Activated CD8-positive, alpha-beta memory T cell treated with anti-CD3 and anti-CD28 coated beads, Interleukin-2, amount 10 ng/mL, durations not matched to agents 7 days and 5 days (primary cell): ENCODE measurements at regions of chr2 and their contacts with region 1.

Region 1: DNA sequence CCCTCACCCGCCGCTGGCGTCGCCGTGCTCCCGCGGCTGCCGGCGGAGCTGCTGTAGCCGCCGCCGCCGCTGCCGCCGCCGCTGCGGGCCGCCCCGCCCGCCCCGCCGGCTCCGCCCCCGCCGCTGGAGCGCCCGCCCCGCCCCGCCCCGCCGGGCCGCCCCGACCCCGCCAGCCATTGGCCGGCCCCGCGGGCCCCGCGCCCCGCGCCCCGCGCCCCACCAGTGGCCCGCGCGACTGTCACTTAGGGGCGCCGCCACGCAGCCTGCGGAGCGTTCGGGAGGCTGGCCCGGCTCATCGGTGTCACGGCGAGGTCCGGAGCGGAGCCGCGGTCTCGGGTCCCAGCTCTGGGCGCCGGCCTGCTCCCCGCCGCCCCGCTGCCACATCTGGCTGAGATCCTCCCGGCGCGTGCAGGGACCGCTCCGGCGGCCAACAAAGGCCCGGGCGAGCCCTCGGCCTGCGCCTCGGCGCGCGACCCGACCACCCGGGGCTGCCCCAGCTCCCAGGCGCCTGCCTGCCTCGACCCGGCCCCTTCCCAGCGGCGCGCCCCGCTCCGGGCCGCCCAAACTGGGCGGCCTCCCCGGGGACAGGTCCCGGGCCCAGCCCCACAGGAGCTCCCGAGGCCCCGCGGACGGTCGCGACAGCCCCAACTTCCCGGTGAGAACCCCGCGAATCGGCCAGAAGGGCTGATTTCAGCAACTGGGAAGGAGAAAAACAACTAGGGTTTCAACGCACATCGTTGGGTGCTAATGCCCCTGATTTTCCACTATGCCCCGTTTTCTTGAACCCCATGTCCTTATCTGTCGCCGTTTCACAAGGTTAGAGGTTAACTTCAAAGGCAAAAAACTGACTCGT is at the start of gene MGAT4A:
- DNase-seq: peak; percentile 83
- ATAC-seq: peak; percentile 87
- H3K4me3 Mint-ChIP-seq: peak within 1 kb of the TSS; percentile 90
- H3K27ac Mint-ChIP-seq: peak within 1 kb of the TSS; percentile 91
- H3K4me1 Mint-ChIP-seq: peaks cover 61% of the 10 kb centered on the region
- H3K27me3 Mint-ChIP-seq: no peaks in the 10 kb centered on the region
- total RNA-seq, gene MGAT4A: 57.4 to 72.0 TPM

Region 2: DNA sequence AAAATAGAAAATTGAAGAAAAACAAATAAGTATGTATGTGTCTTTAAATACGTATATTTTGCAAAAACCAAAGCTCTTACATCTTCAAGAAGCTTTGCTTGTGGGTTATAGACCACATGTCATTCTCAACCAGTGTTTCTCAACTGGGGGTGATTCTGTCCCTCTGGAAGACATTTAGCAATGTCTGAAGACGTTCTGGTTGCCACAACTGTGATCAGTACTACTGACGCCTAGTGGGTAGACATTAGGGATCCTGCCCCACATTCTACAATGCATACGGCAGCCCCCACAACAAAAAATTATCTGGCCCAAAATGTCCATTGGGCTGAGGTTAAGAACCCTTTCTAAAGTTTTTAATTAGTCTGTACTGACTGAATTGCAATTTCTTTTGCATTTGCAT is 74.5 kb before region 1 on chr2:
- CTCF ChIA-PET with region 1: interaction called, 18 read pairs
- DNase-seq: peak; percentile 63
- ATAC-seq: peak; percentile 62
- H3K4me3 Mint-ChIP-seq: peak overlapping the region; percentile 57
- H3K27ac Mint-ChIP-seq: peak overlapping the region; percentile 91
- H3K4me1 Mint-ChIP-seq: peaks cover 87% of the 10 kb centered on the region
- H3K27me3 Mint-ChIP-seq: no peaks in the 10 kb centered on the region

Region 3: GRCh38 chr2:98771721-98772524 is 40.7 kb after region 1 on chr2:
- CTCF ChIA-PET with region 1: interaction called, 24 read pairs
- DNase-seq: peak; percentile 83
- ATAC-seq: peak; percentile 70
- H3K4me3 Mint-ChIP-seq: peak overlapping the region; percentile 86
- H3K27ac Mint-ChIP-seq: peak overlapping the region; percentile 95
- H3K4me1 Mint-ChIP-seq: peaks cover 60% of the 10 kb centered on the region
- H3K27me3 Mint-ChIP-seq: no peaks in the 10 kb centered on the region

Region 4: DNA sequence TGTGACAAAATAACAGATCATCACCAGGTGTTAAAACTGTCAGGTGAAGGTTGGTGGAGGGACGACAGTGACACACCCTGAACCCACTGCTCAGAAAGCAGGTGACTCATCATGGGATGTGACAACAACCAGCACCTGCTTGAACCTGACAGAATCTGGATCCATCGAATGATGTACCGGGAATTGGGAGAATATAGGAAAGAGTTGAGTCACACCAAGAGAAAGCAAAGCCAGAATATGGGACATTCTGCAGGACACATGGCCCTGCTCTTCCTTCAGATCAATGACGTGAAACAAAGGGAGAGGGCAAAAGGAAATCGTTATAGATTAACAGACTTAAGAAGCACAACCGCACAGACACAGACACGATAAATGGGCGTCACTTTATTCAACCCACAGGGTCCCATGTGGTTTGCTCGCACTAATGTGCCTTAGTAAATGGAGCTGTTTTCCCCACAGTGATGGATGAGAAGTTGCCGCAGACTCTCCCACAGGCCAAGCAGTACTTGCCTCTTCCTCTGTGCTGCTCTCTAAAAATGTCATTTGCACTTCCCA is 104.6 kb after region 1 on chr2:
- CTCF ChIA-PET with region 1: interaction called, 21 read pairs
- DNase-seq: peak; percentile 69
- ATAC-seq: peak; percentile 68
- H3K4me3 Mint-ChIP-seq: peak overlapping the region; percentile 36
- H3K27ac Mint-ChIP-seq: peak overlapping the region; percentile 75
- H3K4me1 Mint-ChIP-seq: peaks cover 38% of the 10 kb centered on the region
- H3K27me3 Mint-ChIP-seq: peaks cover 5% of the 10 kb centered on the region